SK-N-SH (cell line): ENCODE measurements at regions of chr15 and their contacts with region 1.

Region 1: GRCh38 chr15:33675246-33675645 is 293.1 kb upstream of the CHRM5 start:
- DNase-seq: peak; percentile 46
- H3K4me3 ChIP-seq: no peak overlapping the region; a peak in 1 of 4 replicates
- H3K27ac ChIP-seq: no peak overlapping the region
- H3K4me1 ChIP-seq: no peaks in the 10 kb centered on the region
- H3K27me3 ChIP-seq: no peaks in the 10 kb centered on the region; the same call in 1 of the 2 replicates
- CTCF ChIP-seq: peak; percentile 57
- EP300 ChIP-seq: no peak
- RAD21 ChIP-seq: peak; percentile 79

Region 2: DNA sequence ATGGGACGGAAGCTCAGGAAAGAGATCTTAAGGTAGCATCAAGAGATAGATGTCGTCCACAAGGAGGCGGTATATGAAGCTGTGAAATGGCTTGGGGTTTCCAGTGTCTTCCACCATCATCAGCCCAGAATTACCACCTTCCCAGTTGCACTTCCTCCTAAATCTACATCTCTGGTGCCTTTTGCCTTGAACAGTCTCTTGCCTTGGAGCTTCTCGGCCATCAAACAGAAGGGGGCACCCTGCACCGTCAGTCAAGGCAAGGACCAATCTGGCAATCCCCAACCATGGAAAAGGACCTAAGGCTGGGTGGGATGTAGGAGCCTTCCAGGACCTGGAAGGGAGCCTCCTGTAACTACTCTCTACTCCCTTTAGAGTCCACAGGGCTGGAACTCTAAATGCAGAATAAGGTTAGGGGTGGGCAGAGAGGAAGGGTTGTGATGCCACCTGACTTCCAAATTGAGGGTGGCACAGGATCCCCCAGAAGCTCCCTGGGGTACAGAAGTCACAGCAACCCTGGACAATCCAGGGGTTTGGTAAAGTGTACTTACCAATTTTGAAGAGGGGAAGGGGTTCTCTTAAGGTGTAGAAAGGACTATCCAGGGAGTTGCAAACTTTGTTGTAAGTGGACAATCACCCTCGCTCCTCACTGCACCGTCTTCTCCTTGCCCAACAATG is 365.5 kb before region 1 on chr15:
- CTCF ChIA-PET with region 1: interaction called, 19 read pairs
- POLR2A ChIA-PET with region 1: no interaction called
- DNase-seq: peak; percentile 28
- H3K4me3 ChIP-seq: no peak overlapping the region
- H3K27ac ChIP-seq: no peak overlapping the region
- H3K4me1 ChIP-seq: peaks cover 0 to 2% of the 10 kb centered on the region in 2 experiments; a peak in 1 of 4 replicates
- H3K27me3 ChIP-seq: peaks cover 41% of the 10 kb centered on the region
- CTCF ChIP-seq: peak; percentile 21
- EP300 ChIP-seq: no peak
- RAD21 ChIP-seq: peak; percentile 48